Panc1 (cell line): ENCODE measurements at regions of chr3 and their contacts with region 1.

Region 1: DNA sequence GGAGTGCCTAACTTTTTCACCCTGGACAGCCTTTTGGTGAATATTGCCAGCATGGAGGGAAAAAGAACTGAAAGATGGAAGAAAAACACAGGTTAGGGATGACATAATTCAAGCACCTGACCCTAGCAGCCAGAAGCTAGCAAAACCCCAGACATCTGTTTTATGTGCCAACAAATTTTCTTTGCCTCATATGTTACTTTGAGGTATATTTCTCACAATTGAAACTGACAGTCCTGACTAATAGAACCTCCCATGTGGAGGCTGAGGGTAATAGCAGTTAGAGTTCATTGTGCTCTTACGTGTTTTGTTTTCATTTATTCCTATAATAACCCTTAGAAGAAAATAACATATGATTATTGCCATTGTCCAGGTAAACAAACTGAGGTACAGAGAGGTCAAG is 71.5 kb upstream of the SLC25A26 start:
- DNase-seq: no peak
- ATAC-seq: no peak
- H3K4me3 ChIP-seq: no peak overlapping the region
- H3K27ac ChIP-seq: no peak overlapping the region
- H3K4me1 ChIP-seq: no peaks in the 10 kb centered on the region
- H3K27me3 ChIP-seq: peaks cover 2% of the 10 kb centered on the region; the same call in 1 of the 2 replicates
- CTCF ChIP-seq: no peak

Region 2: DNA sequence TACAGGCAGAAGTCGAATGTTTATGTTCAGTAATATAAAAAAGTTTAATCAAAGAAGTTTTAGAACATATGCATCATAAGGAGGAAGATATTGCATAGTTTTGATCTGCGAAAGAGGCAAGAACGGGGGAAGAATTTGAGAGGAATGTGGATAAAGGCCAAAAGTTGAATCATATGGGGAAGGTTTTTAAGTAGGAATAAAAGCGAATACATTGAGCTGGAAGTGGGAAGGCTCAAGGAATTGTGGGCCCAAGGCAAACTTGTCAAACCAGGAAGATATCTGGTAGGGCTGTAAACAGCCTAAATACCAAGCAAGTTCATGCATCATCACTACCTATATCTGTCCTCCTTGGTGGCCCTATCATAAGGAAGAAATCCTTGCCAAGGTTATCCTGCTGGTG is 297.4 kb before region 1 on chr3:
- CTCF ChIA-PET with region 1: interaction called, 10 read pairs
- POLR2A ChIA-PET with region 1: no interaction called
- in situ Hi-C with region 1: no loop called
- intact Hi-C with region 1: no loop called
- DNase-seq: no peak
- ATAC-seq: no peak
- H3K4me3 ChIP-seq: no peak overlapping the region
- H3K27ac ChIP-seq: no peak overlapping the region
- H3K4me1 ChIP-seq: peaks cover 4% of the 10 kb centered on the region
- H3K27me3 ChIP-seq: no peaks in the 10 kb centered on the region
- CTCF ChIP-seq: no peak